Common myeloid progenitor, CD34-positive (primary cell): ENCODE measurements at regions of chr11 and their contacts with region 1.

Region 1: DNA sequence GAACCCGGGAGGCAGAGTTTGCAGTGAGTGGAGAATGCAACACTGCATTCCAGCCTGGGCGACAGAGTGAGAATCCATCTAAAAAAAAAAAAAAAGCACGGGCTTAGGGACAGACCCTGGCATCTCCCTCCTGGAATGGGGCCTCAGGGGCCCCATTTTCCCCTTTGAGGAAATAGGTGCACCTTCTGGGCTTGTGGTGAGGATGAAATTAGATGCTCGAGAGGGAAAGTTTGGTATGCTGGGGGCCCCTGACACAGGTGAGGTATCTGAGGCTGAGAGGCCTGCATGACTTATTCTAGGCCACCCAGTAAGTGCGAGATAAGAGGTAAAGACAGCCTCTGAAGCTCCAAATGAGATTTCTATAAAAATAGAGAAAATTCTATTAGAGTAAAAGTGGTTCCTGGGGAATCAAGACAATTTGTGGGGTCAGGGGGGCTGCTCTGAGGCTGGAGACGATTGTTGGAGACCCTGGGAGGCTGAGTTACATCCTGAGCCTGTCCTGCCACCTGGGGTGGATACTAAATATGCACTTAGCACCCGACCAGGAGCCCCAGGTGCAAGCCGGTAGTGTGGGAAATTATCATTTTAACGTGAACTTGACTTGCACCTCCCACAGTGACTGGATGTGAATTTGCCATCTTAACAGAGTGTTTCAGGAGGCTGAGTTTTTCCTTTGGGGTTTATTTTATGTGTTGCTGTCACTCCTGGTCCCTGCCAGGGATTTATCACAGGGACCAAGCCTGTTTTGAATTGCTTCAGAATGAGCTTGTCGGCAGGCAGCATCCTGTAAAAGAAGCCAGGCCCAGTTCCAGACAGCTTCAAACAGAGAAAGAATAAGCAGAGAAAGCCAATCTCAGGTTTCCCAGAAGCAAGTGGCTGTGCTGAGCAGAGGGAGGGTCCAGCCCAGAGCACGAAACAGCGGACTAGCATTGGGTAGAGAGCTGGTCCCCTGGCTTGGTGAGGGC is 48.4 kb upstream of the TSKU start:
- DNase-seq: no peak
- H3K4me3 ChIP-seq: no peak overlapping the region
- H3K27ac ChIP-seq: no peak overlapping the region
- H3K4me1 ChIP-seq: no peaks in the 10 kb centered on the region
- H3K27me3 ChIP-seq: peaks cover 0 to 15% (median 0%) of the 10 kb centered on the region in 5 experiments

Region 2: GRCh38 chr11:76721755-76722677 is 12.7 kb before region 1 on chr11:
- CTCF ChIA-PET with region 1: interaction called, 41 read pairs
- POLR2A ChIA-PET with region 1: no interaction called
- DNase-seq: peak; percentile 77 to 89 (median 82)
- H3K4me3 ChIP-seq: no peak overlapping the region
- H3K27ac ChIP-seq: no peak overlapping the region
- H3K4me1 ChIP-seq: peaks cover 0 to 3% (median 1%) of the 10 kb centered on the region in 4 experiments
- H3K27me3 ChIP-seq: peaks cover 0 to 11% (median 4%) of the 10 kb centered on the region in 5 experiments

Region 3: DNA sequence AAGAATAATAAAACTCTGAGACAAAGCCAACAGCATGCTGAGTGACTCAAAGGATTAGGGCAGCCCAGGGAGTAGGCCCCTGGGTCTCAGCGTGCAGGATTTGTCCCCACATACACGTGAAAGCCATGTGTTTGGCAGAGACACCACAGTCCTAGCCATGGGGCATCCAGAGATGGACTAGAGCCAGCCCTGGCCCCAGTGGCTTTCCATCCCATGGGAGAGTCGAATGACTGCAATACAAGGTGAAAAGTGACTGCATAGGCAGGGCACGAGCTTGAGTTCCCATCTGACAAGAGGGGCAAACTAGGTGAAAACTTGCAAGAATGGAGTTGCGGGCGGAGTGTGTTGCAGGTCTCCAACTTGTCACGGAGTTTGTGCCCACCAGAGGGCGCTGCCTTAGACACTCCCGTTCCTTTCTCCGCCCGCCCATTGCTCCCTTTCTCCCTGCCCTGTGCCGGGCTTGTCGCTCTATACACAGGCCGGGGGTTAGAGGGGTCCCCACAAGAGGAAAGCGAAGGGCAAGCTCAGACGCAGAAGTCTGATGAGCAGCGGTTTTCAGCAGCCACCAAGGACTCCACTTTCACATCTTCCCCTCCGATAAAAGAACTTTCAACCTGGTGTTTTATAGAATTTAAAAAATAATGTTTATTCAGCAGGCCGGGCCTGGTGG is 72.6 kb after region 1 on chr11:
- CTCF ChIA-PET with region 1: interaction called, 123 read pairs
- POLR2A ChIA-PET with region 1: no interaction called
- DNase-seq: peak; percentile 78 to 86 (median 83)
- H3K4me3 ChIP-seq: no peak overlapping the region
- H3K27ac ChIP-seq: no peak overlapping the region
- H3K4me1 ChIP-seq: peaks cover 0 to 5% (median 1%) of the 10 kb centered on the region in 4 experiments
- H3K27me3 ChIP-seq: no peaks in the 10 kb centered on the region

Region 4: GRCh38 chr11:76880314-76880713 is 145.6 kb after region 1 on chr11:
- CTCF ChIA-PET with region 1: no interaction called
- POLR2A ChIA-PET with region 1: no interaction called
- DNase-seq: no peak
- H3K4me3 ChIP-seq: no peak overlapping the region
- H3K27ac ChIP-seq: no peak overlapping the region
- H3K4me1 ChIP-seq: peaks cover 0 to 9% (median under 1%) of the 10 kb centered on the region in 4 experiments
- H3K27me3 ChIP-seq: no peaks in the 10 kb centered on the region